ENCODE measurements at regions of chr19 and their contacts with region 1.

Region 1: DNA sequence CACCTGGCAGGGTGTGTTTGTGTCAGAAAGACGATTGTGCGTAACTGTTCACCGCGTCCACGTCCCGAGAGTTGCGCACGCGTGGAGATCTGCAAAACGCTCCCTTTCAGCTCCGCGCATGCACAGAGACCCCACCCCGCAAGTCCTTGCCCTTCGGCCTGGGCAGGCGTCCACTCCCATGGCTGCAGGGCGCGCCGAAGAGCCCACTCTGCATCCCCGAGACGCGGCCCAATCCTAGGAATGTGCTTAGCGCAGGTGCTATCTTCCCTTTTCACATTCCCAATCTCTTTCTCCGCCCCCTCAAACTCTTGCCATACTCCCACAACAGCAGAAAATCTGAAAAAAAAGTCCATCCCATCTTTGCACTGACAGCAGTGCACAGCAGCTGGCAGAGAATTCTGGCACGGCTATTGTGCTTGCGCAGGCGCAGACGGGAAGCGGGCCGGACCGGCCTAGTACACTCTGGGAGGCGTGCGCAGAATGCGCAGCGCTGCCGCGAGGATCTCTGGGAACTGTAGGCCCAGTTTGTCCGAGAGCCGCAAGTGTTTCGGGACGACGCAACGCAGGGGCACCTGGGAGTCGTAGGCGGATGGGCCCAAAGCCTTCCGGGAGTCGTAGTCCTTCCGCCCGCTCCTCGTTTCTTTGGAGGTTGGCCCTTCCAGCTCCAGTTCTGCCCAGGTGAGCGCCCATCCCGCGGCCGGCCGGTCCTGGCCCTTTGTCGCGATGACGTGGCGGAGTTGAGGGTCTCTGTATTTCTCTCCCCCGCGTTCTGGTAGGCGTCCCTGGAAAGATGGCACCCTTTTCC is 23.1 kb downstream of the ZNF175 start:
- DNase-seq: peak; percentile 99
- H3K4me3 Mint-ChIP-seq: peak overlapping the region; percentile 91
- H3K27ac Mint-ChIP-seq: peak overlapping the region; percentile 84
- H3K4me1 Mint-ChIP-seq: peaks cover 22% of the 10 kb centered on the region
- H3K27me3 Mint-ChIP-seq: no peaks in the 10 kb centered on the region

Region 2: GRCh38 chr19:51108066-51108804 is 485.9 kb before region 1 on chr19 and contains the start of gene CTU1:
- intact Hi-C with region 1: loop called (anchors 1 kb)
- DNase-seq: peak; percentile 99
- H3K4me3 Mint-ChIP-seq: peak within 1 kb of the TSS; percentile 87
- H3K27ac Mint-ChIP-seq: peak within 1 kb of the TSS; percentile 93
- H3K4me1 Mint-ChIP-seq: peaks cover 24% of the 10 kb centered on the region
- H3K27me3 Mint-ChIP-seq: no peaks in the 10 kb centered on the region
- total RNA-seq, gene CTU1: 12.8 and 13.4 TPM in 2 replicates

Region 3: DNA sequence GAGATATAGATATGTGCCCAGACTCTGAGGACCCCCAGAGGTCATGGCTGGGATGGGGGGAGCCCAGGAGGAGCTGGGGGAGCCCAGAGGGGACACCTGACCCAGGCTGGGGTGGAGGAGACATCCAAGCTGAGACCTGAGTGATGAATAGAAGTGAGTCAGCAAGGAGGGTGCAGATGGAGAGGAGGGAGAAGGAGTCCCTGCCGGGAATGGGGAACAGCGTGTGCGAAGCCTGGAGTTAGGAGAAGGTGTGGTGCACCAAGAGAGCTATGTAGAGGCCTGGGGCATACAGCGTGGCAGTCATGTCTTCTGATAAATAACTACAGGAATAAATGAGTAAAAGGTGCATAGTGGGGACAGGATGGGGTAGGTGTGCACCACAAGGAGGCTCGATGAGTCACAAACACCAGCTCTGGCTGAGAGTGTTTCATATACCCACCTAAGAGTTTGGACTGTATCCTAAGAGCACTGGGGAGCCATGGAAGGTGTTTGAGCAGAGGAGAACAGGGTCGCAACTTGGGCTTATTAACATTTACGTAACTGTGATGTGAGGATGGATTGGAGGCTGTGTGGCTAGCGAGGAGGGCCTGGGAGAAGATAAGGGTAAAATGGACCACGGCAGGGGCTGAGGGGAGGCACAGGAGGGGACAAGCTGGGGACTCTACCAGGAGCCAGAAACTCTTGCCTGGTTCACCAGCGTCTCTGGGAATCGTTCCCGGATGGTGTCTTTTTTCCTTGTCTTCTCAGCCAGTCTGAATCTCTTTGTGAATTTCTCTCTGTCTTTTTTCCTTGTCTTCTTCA is 114.4 kb before region 1 on chr19:
- intact Hi-C with region 1: loop called (anchors 1 kb)
- DNase-seq: no peak
- H3K4me3 Mint-ChIP-seq: peak overlapping the region; percentile 13
- H3K27ac Mint-ChIP-seq: peak overlapping the region; percentile 71
- H3K4me1 Mint-ChIP-seq: peaks cover 28% of the 10 kb centered on the region
- H3K27me3 Mint-ChIP-seq: peaks cover 2% of the 10 kb centered on the region

Region 4: GRCh38 chr19:51514866-51515481 is 79.2 kb before region 1 on chr19:
- intact Hi-C with region 1: no loop called
- DNase-seq: peak; percentile 79
- H3K4me3 Mint-ChIP-seq: no peak overlapping the region
- H3K27ac Mint-ChIP-seq: no peak overlapping the region
- H3K4me1 Mint-ChIP-seq: peaks cover 14% of the 10 kb centered on the region
- H3K27me3 Mint-ChIP-seq: peaks cover 27% of the 10 kb centered on the region

Region 5: GRCh38 chr19:51570962-51571575 is 23.1 kb before region 1 on chr19 and contains the start of gene ZNF175:
- intact Hi-C with region 1: loop called (anchors 1 kb)
- DNase-seq: peak; percentile 93
- H3K4me3 Mint-ChIP-seq: peak within 1 kb of the TSS; percentile 92
- H3K27ac Mint-ChIP-seq: peak within 1 kb of the TSS; percentile 84
- H3K4me1 Mint-ChIP-seq: peaks cover 21% of the 10 kb centered on the region
- H3K27me3 Mint-ChIP-seq: peaks cover 15% of the 10 kb centered on the region
- total RNA-seq, gene ZNF175: 8.5 and 10.2 TPM in 2 replicates

Measured in activated CD4-positive, alpha-beta T cell treated with anti-CD3 and anti-CD28 coated beads, Interleukin-2, amount 10 ng/mL, durations not matched to agents 24 days and 14 days (primary cell).